ENCODE measurements at regions of chr10 and their contacts with region 1.

Region 1: DNA sequence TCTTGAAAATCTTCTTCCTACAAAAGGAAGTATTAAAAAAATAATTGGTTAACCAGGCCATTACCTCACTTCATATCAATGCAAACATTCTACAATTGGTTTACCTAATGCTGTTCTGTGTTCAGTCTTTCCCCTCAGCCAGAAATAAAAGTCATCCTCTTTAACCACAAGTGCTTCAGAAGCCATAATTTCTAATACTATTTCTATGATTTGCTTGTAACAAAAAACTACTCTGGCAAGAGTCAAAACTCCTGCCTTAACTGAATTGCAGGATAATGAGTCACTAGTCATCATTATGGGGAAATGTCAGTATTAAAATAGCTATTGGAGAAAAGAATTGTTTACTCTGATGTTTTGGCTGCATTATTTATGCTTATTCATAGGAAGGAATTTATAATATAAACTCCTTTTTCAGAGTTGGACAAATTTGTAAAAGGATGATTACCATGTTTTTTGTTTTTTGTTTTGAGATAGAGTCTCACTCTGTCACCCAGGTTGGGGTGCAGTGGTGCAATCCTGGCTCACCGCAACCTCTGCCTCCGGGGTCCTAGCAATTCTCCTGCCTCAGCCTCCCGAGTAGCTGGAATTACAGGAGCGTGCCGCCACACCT is 55.5 kb upstream of the ODAD2 start:
- DNase-seq: peak; percentile 49
- H3K4me3 ChIP-seq: no peak overlapping the region
- H3K27ac ChIP-seq: peak overlapping the region; percentile 29
- H3K4me1 ChIP-seq: peaks cover 12% of the 10 kb centered on the region
- H3K27me3 ChIP-seq: no peaks in the 10 kb centered on the region
- CTCF ChIP-seq: no peak
- POLR2A ChIP-seq: no peak

Region 2: DNA sequence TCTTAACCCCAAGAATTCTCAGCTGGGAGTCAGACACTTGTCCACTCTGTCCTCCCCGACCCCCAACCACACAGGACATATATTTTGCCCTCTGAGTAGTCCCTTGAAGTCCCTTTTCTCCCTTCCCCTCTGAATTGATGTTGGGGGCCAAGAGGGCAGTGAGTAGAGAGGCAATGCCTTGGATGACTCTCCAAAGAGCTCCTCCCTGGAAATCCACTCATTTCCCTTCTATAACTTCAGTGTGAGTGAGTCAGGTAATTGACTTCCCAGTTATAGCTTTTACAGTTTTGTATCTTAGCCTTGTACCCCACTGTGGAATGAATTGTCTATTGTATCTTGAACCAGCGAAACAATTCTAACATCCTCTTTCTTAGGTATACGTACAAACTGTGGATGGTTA is 46.3 kb before region 1 on chr10:
- CTCF ChIA-PET with region 1: no interaction called
- POLR2A ChIA-PET with region 1: no interaction called
- dilution Hi-C with region 1: no loop called
- intact Hi-C with region 1: loop called (anchors 5 kb)
- DNase-seq: peak; percentile 48
- H3K4me3 ChIP-seq: no peak overlapping the region
- H3K27ac ChIP-seq: peak overlapping the region; percentile 53
- H3K4me1 ChIP-seq: peaks cover 19% of the 10 kb centered on the region
- H3K27me3 ChIP-seq: no peaks in the 10 kb centered on the region
- CTCF ChIP-seq: no peak
- POLR2A ChIP-seq: no peak

Region 3: GRCh38 chr10:28302638-28303488 is 248.5 kb after region 1 on chr10 and contains the start of gene MPP7:
- CTCF ChIA-PET with region 1: no interaction called
- POLR2A ChIA-PET with region 1: no interaction called
- dilution Hi-C with region 1: no loop called
- intact Hi-C with region 1: no loop called
- DNase-seq: peak; percentile 98
- H3K4me3 ChIP-seq: peak within 1 kb of the TSS; percentile 56 to 78 (median 63)
- H3K27ac ChIP-seq: no peak within 1 kb of the TSS
- H3K4me1 ChIP-seq: peaks cover 6% of the 10 kb centered on the region
- H3K27me3 ChIP-seq: peaks cover 23 to 41% of the 10 kb centered on the region in 2 experiments
- CTCF ChIP-seq: no peak
- POLR2A ChIP-seq: no peak
- total RNA-seq, gene MPP7: 0.73 and 1.0 TPM in 2 replicates

Measured in endothelial cell of umbilical vein (primary cell).